ENCODE measurements at regions of chr1 and their contacts with region 1.

Region 1: GRCh38 chr1:206479183-206480125 is 9.2 kb downstream of the IKBKE start:
- DNase-seq: peak; percentile 85
- CTCF ChIP-seq: peak; percentile 74

Region 2: GRCh38 chr1:206461602-206462455 is 17.6 kb before region 1 on chr1:
- CTCF ChIA-PET with region 1: interaction called, 70 read pairs
- POLR2A ChIA-PET with region 1: no interaction called
- DNase-seq: peak; percentile 79
- CTCF ChIP-seq: peak; percentile 81

Region 3: GRCh38 chr1:206507284-206508129 is 28.1 kb after region 1 on chr1 and contains the start of gene RASSF5:
- CTCF ChIA-PET with region 1: interaction called, 179 read pairs
- POLR2A ChIA-PET with region 1: no interaction called
- DNase-seq: peak; percentile 90
- CTCF ChIP-seq: no peak

Region 4: DNA sequence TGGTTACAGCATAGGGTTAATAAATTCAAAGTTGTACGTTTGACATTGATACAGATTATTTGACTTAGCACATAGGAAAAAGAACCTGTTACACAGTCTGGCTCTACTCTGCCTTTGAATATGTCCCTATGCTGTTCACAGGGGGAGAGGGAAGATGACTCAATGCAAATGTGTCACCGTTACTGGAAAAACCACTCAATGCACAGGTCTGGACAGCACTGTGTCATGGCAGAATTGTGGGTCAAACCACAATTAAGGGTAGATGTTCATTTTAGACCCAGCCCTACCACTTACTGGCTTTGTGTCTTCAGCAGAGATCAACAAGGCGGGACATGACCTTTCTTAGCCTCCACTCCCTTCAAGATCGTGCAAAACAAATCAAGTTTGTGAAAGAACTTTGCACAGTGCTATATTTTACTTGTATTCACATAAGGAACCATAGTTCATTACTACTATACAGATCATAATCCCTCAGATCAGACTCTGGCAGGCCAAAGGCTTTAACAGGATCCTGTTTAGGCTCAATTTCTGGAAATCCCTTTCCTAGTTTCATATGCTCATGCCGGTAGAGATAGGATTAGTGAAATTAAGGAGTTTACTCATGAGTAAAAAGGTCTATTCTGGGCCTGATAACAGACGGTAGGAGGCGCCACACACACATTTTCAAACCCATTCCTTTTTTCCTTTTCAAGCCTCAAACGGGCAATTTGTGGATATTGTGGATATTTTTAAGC is 110.7 kb after region 1 on chr1:
- CTCF ChIA-PET with region 1: interaction called, 130 read pairs
- POLR2A ChIA-PET with region 1: no interaction called
- DNase-seq: peak; percentile 54
- CTCF ChIP-seq: peak; percentile 41

Region 5: DNA sequence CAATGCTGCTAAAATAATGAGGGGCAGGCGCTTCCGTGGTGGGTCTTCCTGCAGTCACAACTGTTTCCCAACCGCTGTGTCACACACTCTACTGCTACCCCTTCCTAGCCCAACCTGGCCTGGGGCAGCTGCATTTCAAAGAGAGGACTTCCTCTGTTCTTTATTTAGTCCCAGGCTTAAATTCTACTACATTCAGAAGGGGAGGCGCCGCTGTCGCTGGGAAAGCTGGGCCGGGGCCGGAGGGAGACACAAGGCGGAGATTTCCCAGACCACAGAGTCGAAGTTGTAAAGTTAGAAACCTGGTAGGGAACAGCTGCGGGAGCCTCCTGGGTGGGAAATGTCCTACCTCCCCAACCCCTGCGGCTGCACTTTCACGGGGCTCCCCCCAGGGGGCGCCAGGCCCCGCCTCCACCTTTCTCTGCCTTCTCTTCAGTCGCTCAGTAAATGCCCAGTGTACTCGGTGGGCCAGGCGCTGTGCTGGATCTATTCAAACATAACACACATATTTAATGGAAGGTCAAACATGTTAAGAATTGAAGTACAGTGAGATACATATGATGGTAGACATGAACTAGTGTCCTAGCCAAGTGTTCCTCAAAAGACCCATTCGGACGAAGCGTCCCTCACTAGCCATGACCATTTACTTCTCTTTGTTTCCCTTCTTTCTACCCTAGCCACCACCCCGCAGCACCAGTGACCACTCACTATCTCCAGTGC is 179.0 kb after region 1 on chr1:
- CTCF ChIA-PET with region 1: interaction called, 33 read pairs
- POLR2A ChIA-PET with region 1: no interaction called
- DNase-seq: peak; percentile 79
- CTCF ChIP-seq: peak; percentile 87

Region 6: GRCh38 chr1:206674745-206675175 is 195.3 kb after region 1 on chr1:
- CTCF ChIA-PET with region 1: interaction called, 10 read pairs
- POLR2A ChIA-PET with region 1: no interaction called
- DNase-seq: no peak
- CTCF ChIP-seq: no peak